WTC11 (cell line): ENCODE measurements at regions of chr11 and their contacts with region 1.

Region 1: DNA sequence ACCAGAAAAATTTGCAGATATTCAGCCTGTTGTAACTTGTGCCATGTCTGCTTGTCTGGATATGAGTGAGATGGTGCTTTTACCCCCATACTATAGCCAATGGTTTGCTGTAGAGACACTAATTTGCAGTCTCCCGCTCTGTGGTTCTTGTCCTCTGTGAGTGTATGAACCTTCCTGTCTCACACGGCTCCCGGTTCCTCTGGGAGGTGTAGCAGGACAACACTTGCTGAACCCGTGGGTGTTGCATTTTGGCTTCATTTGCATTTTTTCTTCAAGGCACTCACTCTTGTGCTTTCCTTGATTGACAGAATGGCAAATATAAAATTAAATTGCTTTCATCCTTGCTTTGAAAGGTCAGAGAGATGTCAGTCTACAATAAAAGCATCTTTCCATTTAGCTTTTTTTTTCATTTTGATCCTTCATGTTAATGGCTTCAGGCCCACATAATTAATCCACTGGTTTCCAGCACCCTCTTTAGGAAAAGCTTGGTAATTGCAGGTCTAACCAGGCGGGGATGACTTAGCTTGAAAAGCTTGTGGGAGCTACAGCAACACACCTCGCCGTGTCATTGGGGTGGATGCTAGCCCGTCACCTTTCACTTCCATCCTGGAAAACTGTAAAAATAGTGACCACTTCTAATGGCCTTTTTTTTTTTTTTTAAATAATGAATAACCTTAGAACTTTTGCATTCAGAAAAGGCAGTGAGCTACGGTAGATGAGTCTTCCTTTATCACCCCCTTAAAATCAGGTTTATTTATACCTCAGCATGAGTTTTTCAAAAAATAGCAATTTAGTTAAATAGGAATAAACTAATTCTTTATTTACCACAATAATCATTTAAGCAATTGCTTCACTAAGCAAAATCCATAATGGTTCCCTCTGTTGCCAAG is 27.4 kb upstream of the ST14 start:
- DNase-seq: peak; percentile 67
- ATAC-seq: peak; percentile 89
- H3K4me3 Mint-ChIP-seq: no peak overlapping the region
- H3K27ac Mint-ChIP-seq: peak overlapping the region; percentile 47; the same call in 1 of the 2 replicates
- H3K4me1 Mint-ChIP-seq: no peaks in the 10 kb centered on the region
- H3K27me3 Mint-ChIP-seq: no peaks in the 10 kb centered on the region
- CTCF ChIP-seq: no peak

Region 2: DNA sequence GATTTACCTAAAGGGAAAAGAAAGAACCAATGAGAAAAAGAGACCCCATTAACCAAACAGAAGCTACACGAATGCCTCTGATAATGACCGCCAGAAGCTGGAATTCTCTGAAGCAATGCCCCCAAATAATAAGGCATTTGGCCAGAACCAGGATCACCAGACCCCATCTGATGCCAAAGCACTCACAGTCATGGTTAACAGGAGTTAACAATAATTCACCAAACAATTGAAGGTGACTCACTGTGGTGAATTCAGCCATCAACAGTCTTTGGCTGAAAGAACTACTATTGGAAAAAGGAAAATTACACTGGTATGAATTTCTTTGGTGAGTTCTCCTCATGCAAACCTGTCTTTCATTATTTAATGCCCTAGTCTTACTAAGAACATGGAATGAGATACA is 215.0 kb before region 1 on chr11:
- CTCF ChIA-PET with region 1: interaction called, 50 read pairs
- POLR2A ChIA-PET with region 1: no interaction called
- DNase-seq: no peak
- ATAC-seq: no peak
- H3K4me3 Mint-ChIP-seq: no peak overlapping the region
- H3K27ac Mint-ChIP-seq: no peak overlapping the region
- H3K4me1 Mint-ChIP-seq: no peaks in the 10 kb centered on the region
- H3K27me3 Mint-ChIP-seq: no peaks in the 10 kb centered on the region
- CTCF ChIP-seq: no peak

Region 3: DNA sequence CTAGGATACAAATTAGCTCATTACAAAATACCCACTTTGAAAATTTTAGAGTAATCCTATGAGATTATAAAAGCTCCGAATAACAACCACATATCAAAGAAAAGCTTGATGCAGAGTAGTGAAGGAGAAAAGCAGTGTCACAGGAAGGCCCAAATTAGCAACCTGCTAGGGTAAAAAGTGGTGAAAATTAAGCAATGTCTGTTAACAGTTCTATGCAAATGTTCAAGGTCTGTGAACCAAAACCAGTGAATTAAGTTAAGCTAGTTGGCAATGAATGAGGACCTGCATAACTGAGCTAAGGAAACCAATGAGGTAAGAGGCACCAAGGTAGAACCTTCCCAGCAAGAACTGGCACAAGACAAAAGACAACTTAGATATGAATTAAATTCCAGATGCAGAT is 159.1 kb before region 1 on chr11:
- CTCF ChIA-PET with region 1: interaction called, 17 read pairs
- POLR2A ChIA-PET with region 1: no interaction called
- DNase-seq: no peak
- ATAC-seq: no peak
- H3K4me3 Mint-ChIP-seq: peak overlapping the region; percentile 11; the same call in 1 of the 2 replicates
- H3K27ac Mint-ChIP-seq: peak overlapping the region; percentile 96
- H3K4me1 Mint-ChIP-seq: peaks cover 25% of the 10 kb centered on the region
- H3K27me3 Mint-ChIP-seq: no peaks in the 10 kb centered on the region
- CTCF ChIP-seq: no peak

Region 4: DNA sequence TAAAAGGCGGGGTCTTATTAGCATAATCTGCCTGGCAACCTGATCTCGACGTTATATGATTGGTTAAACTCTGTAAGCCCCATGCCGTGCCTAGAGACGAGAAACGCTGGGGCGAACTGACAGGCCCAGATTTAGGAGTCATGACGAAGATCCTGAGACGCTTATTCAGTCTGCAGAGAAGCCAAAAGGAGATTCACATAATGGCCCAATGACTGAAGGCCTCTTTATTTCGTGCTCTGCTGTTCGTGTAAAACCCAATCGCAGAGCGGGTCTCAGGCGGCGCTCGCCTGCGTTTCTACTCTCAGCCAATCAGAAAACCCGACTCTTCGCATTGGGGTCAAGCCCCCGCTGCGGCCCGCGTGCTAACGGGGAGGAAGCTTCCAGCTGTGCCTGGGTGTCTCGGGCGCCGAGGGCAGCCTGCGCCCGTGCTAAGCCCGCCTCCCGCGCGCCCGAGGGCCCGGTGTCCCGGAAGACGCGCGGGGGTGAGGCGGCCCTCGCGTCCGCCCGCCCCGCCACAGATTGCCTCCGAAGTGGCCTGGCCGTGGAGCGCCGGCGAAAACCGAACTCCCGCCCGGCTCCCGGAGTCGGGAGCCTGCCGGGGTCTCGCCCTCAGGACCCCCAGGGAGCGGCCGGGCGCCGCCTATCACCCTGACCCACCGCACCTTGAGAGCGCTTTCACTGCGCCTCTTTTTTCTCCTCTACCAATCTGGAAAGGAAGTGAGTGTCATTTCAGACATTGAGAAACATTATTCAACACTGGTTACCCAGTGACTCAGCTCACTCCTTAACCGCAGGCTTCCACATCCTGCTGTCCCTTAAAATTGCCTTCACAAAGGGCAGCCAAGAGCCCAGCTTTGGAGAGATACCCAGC is 129.1 kb before region 1 on chr11:
- CTCF ChIA-PET with region 1: interaction called, 12 read pairs
- POLR2A ChIA-PET with region 1: no interaction called
- DNase-seq: peak; percentile 84
- ATAC-seq: peak; percentile 84
- H3K4me3 Mint-ChIP-seq: peak overlapping the region; percentile 93
- H3K27ac Mint-ChIP-seq: peak overlapping the region; percentile 100
- H3K4me1 Mint-ChIP-seq: peaks cover 32% of the 10 kb centered on the region
- H3K27me3 Mint-ChIP-seq: no peaks in the 10 kb centered on the region
- CTCF ChIP-seq: no peak

Region 5: GRCh38 chr11:130145975-130146776 is 14.0 kb after region 1 on chr11:
- CTCF ChIA-PET with region 1: interaction called, 96 read pairs
- POLR2A ChIA-PET with region 1: interaction called, 8 read pairs
- DNase-seq: peak; percentile 90
- ATAC-seq: peak; percentile 99
- H3K4me3 Mint-ChIP-seq: peak overlapping the region; percentile 24
- H3K27ac Mint-ChIP-seq: peak overlapping the region; percentile 98
- H3K4me1 Mint-ChIP-seq: peaks cover 26% of the 10 kb centered on the region
- H3K27me3 Mint-ChIP-seq: no peaks in the 10 kb centered on the region
- CTCF ChIP-seq: no peak